ENCODE measurements at regions of chr11 and their contacts with region 1.

Region 1: DNA sequence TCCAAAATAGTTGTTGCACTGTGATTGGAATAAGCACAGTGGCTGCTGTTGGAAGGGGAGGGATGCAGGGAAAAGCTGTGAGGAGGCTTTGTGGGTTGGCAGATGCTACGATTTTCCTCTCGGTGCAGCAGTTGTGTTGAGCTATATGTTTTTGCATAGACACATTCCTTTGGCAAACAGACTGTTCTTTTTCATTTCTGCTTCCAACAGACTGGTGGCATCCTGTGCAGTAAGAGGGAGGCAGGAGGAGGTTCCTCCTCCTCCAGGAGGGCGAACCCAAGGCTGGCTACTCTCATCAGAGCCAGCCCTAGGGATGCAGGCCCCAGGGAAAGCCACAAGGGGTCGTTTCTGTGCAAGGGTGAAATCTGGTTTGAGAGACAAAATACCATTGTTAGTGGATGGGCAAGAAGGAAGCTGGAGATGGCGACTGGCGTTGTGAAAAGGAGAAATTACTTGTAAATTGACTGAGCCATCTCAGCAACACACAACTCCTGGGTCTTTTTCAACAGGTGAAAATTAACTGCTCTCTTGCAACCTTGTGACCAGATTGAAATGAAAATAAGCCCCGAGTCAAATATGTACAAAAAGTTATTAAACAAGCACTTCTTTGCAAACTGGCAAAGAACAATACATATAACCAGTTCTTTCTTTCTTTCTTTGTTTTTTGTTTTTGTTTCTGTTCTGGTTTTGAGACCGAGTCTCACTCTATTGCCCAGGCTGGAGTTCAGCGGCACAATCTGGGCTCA is 26.5 kb upstream of the UBASH3B start:
- DNase-seq: peak; percentile 64
- H3K4me3 ChIP-seq: no peak overlapping the region
- H3K27ac ChIP-seq: no peak overlapping the region
- H3K4me1 ChIP-seq: peaks cover 0 to 3% (median 0%) of the 10 kb centered on the region in 4 donors
- H3K27me3 ChIP-seq: no peaks in the 10 kb centered on the region
- CTCF ChIP-seq: peak; percentile 58 to 74 (median 70)
- EP300 ChIP-seq: no peak
- POLR2A ChIP-seq: no peak

Region 2: DNA sequence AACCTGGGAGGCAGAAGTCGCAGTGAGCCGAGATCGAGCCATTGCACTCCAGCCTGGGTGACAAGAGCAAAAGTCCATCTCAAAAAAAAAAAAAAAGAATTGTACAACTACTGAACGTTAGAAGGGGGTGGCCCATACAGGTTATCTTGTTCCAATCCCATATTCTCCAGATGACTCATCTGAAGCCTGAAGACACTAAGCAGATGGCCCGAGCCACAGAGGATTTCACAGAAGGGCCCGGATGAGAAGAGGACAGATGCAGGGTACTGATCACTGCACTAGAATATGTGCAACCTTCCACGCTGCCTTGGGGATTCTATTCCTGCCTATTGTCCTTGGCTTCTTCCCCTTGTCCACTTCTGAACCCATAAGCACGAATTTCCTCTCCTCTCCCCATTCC is 44.3 kb before region 1 on chr11:
- in situ Hi-C with region 1: no loop called
- intact Hi-C with region 1: no loop called
- DNase-seq: no peak
- H3K4me3 ChIP-seq: no peak overlapping the region
- H3K27ac ChIP-seq: no peak overlapping the region
- H3K4me1 ChIP-seq: peaks cover 0 to 8% (median 0%) of the 10 kb centered on the region in 4 donors
- H3K27me3 ChIP-seq: peaks cover 5% of the 10 kb centered on the region
- CTCF ChIP-seq: no peak
- EP300 ChIP-seq: no peak
- POLR2A ChIP-seq: no peak

Region 3: GRCh38 chr11:122754553-122755322 is 125.8 kb after region 1 on chr11:
- in situ Hi-C with region 1: loop called in 1 of 4 experiments (anchors 10 kb)
- intact Hi-C with region 1: no loop called
- DNase-seq: peak; percentile 11
- H3K4me3 ChIP-seq: no peak overlapping the region
- H3K27ac ChIP-seq: no peak overlapping the region
- H3K4me1 ChIP-seq: no peaks in the 10 kb centered on the region
- H3K27me3 ChIP-seq: no peaks in the 10 kb centered on the region
- CTCF ChIP-seq: peak; percentile 16 to 29 (median 27)
- EP300 ChIP-seq: no peak
- POLR2A ChIP-seq: no peak

Region 4: DNA sequence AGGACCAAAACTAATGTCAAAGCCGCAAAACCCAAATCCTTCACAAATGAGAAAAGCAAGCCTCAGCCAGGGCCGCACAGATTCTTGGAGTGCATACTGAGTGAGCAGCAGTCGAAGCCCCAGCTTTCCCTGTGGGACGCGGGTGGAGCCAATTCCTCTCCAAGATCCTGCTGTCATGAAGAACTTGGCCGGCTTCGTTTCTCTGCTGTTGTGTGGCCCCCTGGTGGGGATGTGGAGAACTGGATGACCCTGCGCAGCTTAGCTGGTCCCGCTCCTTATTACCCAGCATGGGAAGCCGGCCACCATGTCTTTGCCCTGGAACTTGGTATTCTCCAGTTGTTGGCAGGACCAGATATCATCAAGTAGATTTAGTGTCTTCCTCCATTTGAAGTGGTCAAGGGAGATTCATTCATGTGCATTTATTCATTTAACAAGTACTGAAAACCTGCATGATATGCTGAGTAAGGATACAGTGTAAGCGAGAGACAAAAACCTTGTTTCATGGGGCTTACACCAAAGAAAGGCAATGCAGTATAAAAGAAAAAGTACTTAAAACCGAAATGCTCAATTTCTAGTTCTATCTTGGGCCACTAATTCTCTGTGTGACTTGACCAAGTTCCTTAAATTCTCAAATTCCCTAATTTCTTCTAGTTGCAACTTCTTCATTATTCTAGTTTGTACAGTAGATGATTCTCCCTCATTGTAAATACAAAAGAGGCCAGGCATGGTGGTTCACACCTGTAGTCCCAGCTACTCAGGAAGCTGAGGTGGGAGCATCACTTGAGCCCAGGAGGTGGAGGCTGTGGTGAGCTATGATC is 152.6 kb after region 1 on chr11:
- in situ Hi-C with region 1: loop called (anchors 5 to 10 kb)
- intact Hi-C with region 1: loop called (anchors 2 kb)
- DNase-seq: peak; percentile 85
- H3K4me3 ChIP-seq: no peak overlapping the region
- H3K27ac ChIP-seq: no peak overlapping the region
- H3K4me1 ChIP-seq: peaks cover 0 to 6% (median 0%) of the 10 kb centered on the region in 4 donors
- H3K27me3 ChIP-seq: no peaks in the 10 kb centered on the region
- CTCF ChIP-seq: peak; percentile 89 to 91 (median 89)
- EP300 ChIP-seq: no peak
- POLR2A ChIP-seq: no peak

Region 5: DNA sequence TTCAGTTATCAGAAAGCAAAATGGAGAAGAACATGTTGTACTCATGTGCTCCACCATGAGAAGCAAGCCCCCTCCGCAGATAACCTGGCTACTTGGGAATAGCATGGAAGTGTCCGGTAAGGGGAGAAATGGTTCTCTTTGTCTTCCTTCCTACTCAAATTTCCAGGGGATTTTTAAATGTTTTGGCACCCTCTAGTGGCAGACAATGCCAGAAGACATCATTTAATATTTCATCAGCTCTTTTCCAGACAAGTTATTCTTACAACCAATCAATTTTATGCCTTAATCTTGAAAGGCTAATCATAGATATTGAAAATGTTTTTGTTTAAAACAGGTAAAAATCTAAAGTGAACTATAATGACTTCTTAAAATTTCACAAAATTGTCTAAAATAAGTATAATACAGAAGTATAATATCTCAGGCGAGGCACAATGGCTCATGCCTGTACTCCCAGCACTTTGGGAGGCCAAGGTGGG is 225.0 kb after region 1 on chr11:
- in situ Hi-C with region 1: loop called in 1 of 4 experiments (anchors 25 kb)
- intact Hi-C with region 1: no loop called
- DNase-seq: peak; percentile 31
- H3K4me3 ChIP-seq: no peak overlapping the region
- H3K27ac ChIP-seq: no peak overlapping the region
- H3K4me1 ChIP-seq: no peaks in the 10 kb centered on the region
- H3K27me3 ChIP-seq: no peaks in the 10 kb centered on the region
- CTCF ChIP-seq: peak; percentile 65 to 72 (median 69)
- EP300 ChIP-seq: no peak
- POLR2A ChIP-seq: no peak

Region 6: DNA sequence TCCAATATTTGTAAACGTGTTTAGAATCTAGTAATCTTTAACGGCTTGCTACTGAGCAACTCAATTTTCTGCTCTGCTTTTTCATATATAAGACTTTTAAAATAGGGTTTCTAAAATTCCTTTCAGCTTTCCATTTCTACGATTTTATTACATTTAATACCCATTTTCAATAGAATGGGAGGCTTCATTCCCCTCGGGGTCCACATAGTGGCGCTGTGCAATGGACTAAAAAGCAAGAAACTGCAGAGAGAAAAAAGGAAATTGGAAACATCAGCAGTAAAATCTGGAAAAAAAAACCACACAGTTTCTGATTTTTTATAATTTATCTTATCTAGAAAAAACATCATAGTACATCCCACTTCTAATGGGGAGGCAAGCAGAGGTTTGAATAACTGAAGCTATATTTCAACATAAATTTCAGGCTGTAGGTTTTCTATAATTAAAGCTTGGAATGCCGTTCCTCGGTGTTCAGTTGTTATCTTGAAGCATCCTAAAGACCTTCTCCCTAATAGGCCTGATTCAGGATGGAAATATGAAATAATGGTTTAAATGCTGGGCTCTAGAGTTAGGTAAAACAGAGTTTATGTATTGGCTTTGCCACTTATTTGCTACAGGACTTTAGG is 234.8 kb after region 1 on chr11:
- in situ Hi-C with region 1: loop called in 2 of 4 experiments (anchors 10 to 25 kb)
- intact Hi-C with region 1: no loop called
- DNase-seq: peak; percentile 47
- H3K4me3 ChIP-seq: no peak overlapping the region
- H3K27ac ChIP-seq: no peak overlapping the region
- H3K4me1 ChIP-seq: no peaks in the 10 kb centered on the region
- H3K27me3 ChIP-seq: peaks cover 19% of the 10 kb centered on the region
- CTCF ChIP-seq: peak; percentile 64 to 75 (median 73)
- EP300 ChIP-seq: no peak
- POLR2A ChIP-seq: no peak

Region 7: DNA sequence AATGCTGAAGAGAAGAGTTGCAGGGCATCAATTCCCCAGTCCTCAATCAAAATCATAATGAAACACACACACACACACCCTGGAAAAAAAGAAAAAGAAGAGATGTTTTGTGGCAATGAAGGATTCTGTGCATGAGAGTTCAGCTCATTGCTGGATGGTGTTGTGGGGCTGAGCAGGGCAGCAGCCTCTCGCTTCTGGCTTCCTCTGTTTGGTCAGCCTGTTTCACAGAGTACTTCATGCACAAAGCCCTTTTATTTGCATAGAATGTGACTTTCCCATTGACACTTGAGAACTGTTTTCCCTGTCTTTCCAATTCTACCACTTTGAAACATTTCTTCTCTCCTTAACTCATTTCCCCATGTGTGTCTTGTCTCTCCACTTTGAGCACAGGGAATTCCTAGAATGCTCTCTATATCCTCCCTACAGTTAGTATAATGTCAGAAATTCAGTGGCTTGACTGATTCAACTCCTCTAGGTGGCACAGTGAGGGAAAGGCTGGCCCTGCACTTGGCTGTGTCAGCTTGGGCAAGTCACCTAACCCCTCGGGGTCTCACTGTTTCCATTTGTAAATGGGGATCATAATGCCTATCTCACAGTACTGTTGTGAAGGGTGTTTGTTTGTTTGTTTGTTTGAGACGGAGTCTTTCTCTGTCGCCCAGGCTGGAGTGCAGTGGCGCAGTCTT is 378.0 kb after region 1 on chr11:
- in situ Hi-C with region 1: no loop called
- intact Hi-C with region 1: no loop called
- DNase-seq: no peak
- H3K4me3 ChIP-seq: no peak overlapping the region
- H3K27ac ChIP-seq: no peak overlapping the region
- H3K4me1 ChIP-seq: no peaks in the 10 kb centered on the region
- H3K27me3 ChIP-seq: no peaks in the 10 kb centered on the region
- CTCF ChIP-seq: no peak
- EP300 ChIP-seq: no peak
- POLR2A ChIP-seq: no peak

Region 8: DNA sequence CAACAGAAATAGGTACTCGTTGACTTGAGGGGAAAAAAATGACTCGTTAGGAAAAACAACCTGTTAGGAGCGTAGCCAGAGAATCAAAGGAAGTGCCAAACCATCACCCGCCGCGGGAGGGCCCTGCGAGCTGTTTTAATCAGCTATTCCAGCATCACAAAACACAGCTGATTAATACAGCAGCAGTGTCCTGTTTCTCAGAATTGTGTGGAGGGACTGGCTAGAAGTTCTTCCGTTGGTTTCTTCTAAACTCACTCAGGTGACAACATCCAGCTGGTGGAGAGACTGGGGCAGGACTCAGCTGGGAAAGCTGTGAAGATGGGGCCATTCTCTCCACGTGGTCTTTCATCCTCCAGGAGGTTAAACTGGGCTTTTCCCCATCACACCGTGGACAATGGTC is 404.9 kb after region 1 on chr11:
- in situ Hi-C with region 1: loop called in 2 of 4 experiments (anchors 25 kb)
- intact Hi-C with region 1: no loop called
- DNase-seq: no peak
- H3K4me3 ChIP-seq: no peak overlapping the region
- H3K27ac ChIP-seq: no peak overlapping the region
- H3K4me1 ChIP-seq: no peaks in the 10 kb centered on the region
- H3K27me3 ChIP-seq: no peaks in the 10 kb centered on the region
- CTCF ChIP-seq: no peak
- EP300 ChIP-seq: no peak
- POLR2A ChIP-seq: no peak

Measured in transverse colon (tissue), 4 donors.